Transverse colon (tissue), 4 donors: ENCODE measurements at regions of chr1 and their contacts with region 1.

Region 1: GRCh38 chr1:191851799-191852595 is 306.3 kb upstream of the RGS18 start:
- DNase-seq: no peak
- H3K4me3 ChIP-seq: no peak overlapping the region
- H3K27ac ChIP-seq: no peak overlapping the region
- H3K4me1 ChIP-seq: no peaks in the 10 kb centered on the region
- H3K27me3 ChIP-seq: no peaks in the 10 kb centered on the region
- CTCF ChIP-seq: no peak
- EP300 ChIP-seq: no peak
- POLR2A ChIP-seq: no peak

Region 2: GRCh38 chr1:191561276-191561675 is 290.7 kb before region 1 on chr1:
- in situ Hi-C with region 1: no loop called
- intact Hi-C with region 1: no loop called
- DNase-seq: no peak
- H3K4me3 ChIP-seq: no peak overlapping the region
- H3K27ac ChIP-seq: no peak overlapping the region
- H3K4me1 ChIP-seq: no peaks in the 10 kb centered on the region
- H3K27me3 ChIP-seq: no peaks in the 10 kb centered on the region
- CTCF ChIP-seq: no peak
- EP300 ChIP-seq: no peak
- POLR2A ChIP-seq: no peak

Region 3: GRCh38 chr1:191839891-191840290 is 12.1 kb before region 1 on chr1:
- in situ Hi-C with region 1: no loop called
- intact Hi-C with region 1: loop called (anchors 1 kb)
- DNase-seq: no peak
- H3K4me3 ChIP-seq: no peak overlapping the region
- H3K27ac ChIP-seq: no peak overlapping the region
- H3K4me1 ChIP-seq: no peaks in the 10 kb centered on the region
- H3K27me3 ChIP-seq: no peaks in the 10 kb centered on the region
- CTCF ChIP-seq: no peak
- EP300 ChIP-seq: no peak
- POLR2A ChIP-seq: no peak

Region 4: DNA sequence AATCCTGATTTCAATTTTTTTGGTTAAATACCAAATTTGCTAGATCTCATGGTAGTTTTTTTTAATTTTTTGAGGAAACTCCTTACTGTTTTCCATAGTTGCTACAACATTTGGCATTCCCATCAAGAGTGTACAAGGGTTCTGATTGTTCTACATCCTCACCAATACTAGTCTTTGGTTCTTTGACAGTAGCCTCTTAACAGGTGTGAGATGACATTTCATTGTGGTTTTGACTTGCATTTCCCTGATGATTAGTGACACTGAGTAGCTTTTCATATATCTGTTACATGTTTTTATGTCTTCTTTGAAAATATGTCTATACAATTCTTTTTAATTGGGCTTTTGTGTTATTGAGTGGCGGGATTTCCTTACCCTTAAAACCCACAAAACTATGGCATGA is 763.1 kb after region 1 on chr1:
- in situ Hi-C with region 1: no loop called
- intact Hi-C with region 1: no loop called
- DNase-seq: no peak
- H3K4me3 ChIP-seq: no peak overlapping the region
- H3K27ac ChIP-seq: no peak overlapping the region
- H3K4me1 ChIP-seq: peaks cover 0 to 3% (median 0%) of the 10 kb centered on the region in 4 donors
- H3K27me3 ChIP-seq: no peaks in the 10 kb centered on the region
- CTCF ChIP-seq: no peak
- EP300 ChIP-seq: no peak
- POLR2A ChIP-seq: no peak